ENCODE measurements at regions of chr17 and their contacts with region 1.

Region 1: DNA sequence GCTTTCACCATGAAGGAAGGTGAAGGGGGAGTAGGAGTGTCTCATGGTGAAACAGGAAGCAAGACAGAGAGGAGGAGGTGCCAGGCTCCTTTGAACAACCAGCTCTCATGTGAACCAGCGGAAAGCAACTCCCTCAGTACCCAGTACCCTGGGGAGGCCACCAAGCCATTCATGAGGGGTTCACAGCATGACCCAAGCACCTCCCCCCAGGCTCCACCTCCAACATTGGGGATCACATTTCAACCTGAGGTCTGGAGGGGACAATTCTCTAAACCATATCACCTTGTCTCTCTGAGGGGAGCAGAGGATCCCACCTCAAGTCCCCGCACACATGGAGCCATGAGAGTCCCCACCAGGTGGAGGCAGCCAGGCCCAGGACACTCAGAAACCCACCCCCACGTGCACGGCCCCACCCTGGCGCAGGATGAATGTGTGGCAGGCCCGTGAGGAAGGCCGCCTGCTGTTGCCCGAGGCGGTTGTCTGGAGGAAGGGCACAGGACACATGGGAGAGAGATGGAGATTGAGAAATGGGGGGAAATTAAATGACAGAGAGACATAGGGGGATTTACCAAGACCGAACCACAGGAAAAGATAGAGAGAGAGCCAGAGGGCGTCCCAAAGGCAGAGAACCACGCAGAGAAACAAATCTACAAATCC is 85.9 kb downstream of the TMEM132E start:
- DNase-seq: no peak
- ATAC-seq: no peak
- H3K4me3 ChIP-seq: no peak overlapping the region
- H3K27ac ChIP-seq: no peak overlapping the region
- H3K4me1 ChIP-seq: no peaks in the 10 kb centered on the region
- H3K27me3 ChIP-seq: no peaks in the 10 kb centered on the region

Region 2: GRCh38 chr17:34598161-34598776 is 67.0 kb before region 1 on chr17:
- intact Hi-C with region 1: no loop called
- DNase-seq: peak in 1 of 3 donors; percentile 8
- ATAC-seq: no peak
- H3K4me3 ChIP-seq: no peak overlapping the region
- H3K27ac ChIP-seq: no peak overlapping the region
- H3K4me1 ChIP-seq: no peaks in the 10 kb centered on the region
- H3K27me3 ChIP-seq: no peaks in the 10 kb centered on the region

Region 3: DNA sequence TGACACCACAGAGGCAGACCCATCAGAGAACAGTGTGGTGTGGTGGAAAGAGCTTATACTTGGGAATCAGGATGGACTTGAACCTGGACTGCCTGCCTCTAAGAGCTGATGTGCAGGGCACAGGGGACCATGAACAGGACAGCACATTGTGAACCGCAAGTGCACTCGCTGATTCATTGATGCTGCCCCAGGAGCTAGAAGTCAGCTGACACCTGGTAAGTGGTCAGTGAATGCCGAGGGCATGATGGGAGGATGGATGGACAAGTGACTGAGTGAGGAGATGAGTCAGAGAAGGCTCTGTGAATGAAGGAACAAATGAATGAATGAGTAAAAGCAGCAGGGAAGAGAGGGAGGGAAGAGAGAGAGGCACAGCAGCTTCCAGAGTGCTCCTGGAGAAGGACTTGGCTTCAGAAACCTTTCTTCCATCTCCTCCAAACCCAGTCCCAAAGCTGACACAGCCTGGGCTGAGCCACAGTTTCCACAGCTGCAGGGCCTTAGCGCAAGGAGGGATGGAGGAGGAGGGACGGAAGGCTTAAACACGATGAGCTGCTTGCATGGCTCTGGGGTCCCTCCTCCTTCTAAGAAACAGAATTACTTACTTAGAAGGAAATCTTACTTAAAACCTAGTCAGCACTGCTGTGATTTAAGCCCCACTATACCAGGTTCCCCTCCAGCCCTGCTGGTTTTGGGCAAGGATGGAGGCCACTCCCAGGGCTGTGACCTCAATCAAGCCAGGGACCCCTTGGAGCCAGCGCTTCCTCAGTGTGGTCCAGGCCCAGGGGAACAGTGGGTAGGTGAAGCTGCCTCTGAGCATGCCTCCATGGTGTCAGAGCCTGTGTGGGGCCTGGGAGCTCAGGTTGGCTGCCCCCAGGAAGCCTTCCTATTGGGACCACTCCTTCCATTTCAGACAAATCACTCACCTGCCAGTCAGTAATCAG is 98.7 kb after region 1 on chr17:
- intact Hi-C with region 1: loop called in 1 of 4 experiments (anchors 10 kb)
- DNase-seq: no peak
- ATAC-seq: no peak
- H3K4me3 ChIP-seq: no peak overlapping the region
- H3K27ac ChIP-seq: no peak overlapping the region
- H3K4me1 ChIP-seq: no peaks in the 10 kb centered on the region
- H3K27me3 ChIP-seq: no peaks in the 10 kb centered on the region

Measured in right cardiac atrium (tissue), 5 donors.